Activated CD8-positive, alpha-beta T cell treated with anti-CD3 and anti-CD28 coated beads for 36 hours (primary cell): ENCODE measurements at regions of chr15 and their contacts with region 1.

Region 1: DNA sequence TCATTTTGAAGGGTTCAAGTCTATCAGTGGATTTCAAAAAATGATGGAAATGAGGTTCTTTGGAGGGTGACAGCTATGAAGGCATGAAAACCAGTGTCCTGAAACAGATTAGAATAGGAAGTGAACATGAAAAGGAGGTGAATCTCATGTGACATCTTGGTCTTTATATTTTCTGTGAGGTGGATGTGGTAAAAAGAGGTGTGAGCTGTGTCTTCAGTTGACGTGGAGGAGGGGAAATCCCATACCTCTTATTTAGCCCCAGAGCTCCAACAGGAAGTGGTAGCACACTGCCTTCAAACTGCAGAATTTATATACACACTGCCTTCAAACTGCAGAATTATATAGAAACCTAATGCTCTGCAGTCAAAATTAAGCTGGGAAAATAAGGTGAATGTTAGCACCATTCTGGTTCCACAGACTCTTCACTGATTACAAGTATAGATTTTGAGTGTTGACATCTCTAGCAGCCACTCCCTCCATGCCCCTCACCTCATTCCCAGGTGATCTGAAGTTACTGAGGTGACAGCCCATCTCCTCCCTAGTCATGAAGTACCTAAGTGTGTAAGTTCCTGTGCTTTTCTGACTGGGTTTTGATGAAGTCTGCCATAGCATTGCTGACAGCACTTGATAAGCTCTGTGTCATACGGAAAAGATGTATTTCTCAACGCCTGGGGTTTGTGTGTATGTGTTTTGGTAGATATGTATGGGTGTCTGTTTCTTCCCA is 2.7 kb downstream of the RAB8B start:
- DNase-seq: peak; percentile 78
- ATAC-seq: peak; percentile 49
- H3K4me3 Mint-ChIP-seq: peak overlapping the region; percentile 89
- H3K27ac Mint-ChIP-seq: peak overlapping the region; percentile 93
- H3K4me1 Mint-ChIP-seq: peaks cover 53% of the 10 kb centered on the region
- H3K27me3 Mint-ChIP-seq: no peaks in the 10 kb centered on the region
- CTCF ChIP-seq: no peak

Region 2: GRCh38 chr15:63157118-63157843 is 34.8 kb before region 1 on chr15 and contains the start of gene RPS27L:
- CTCF ChIA-PET with region 1: interaction called, 5 read pairs
- POLR2A ChIA-PET with region 1: interaction called, 20 read pairs
- intact Hi-C with region 1: loop called (anchors 5 kb)
- DNase-seq: peak; percentile 94
- ATAC-seq: peak; percentile 97
- H3K4me3 Mint-ChIP-seq: peak within 1 kb of the TSS; percentile 98
- H3K27ac Mint-ChIP-seq: peak within 1 kb of the TSS; percentile 97
- H3K4me1 Mint-ChIP-seq: peaks cover 17% of the 10 kb centered on the region
- H3K27me3 Mint-ChIP-seq: no peaks in the 10 kb centered on the region
- CTCF ChIP-seq: no peak
- total RNA-seq, gene RPS27L: 150 to 158 TPM

Region 3: DNA sequence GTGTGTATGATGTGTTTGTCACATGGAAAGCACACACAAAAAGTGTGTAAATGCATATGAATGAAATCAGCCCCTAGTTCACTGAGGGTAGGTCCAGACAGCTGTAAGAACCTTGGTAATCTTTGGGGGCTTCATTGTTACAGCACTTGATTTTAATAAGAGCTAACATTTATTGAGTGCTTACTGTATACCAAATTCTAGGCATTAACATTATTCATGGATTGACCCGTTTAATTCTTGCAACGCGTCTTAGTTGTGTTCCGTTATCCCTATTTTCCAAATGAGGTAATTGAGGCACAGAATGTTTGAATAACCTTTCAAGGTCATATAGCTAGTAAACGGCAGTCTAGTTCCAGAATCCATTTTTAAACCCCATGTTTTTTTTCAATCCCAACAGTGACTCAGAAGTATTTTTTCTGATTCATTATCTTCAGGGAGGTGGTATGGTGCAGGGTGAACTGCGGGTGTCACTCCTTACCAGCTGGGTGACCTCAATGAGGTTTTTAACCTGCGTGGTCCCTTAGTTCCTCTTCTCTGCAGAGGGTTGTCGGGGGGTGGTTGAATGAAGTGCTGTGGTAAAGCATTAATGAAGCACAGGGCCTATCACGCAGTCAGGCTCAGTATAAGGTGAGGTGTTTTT is 11.5 kb after region 1 on chr15:
- CTCF ChIA-PET with region 1: interaction called, 15 read pairs
- POLR2A ChIA-PET with region 1: interaction called, 39 read pairs
- intact Hi-C with region 1: no loop called
- DNase-seq: peak; percentile 84
- ATAC-seq: peak; percentile 81
- H3K4me3 Mint-ChIP-seq: peak overlapping the region; percentile 8
- H3K27ac Mint-ChIP-seq: peak overlapping the region; percentile 74
- H3K4me1 Mint-ChIP-seq: peaks cover 90% of the 10 kb centered on the region
- H3K27me3 Mint-ChIP-seq: no peaks in the 10 kb centered on the region
- CTCF ChIP-seq: no peak

Region 4: DNA sequence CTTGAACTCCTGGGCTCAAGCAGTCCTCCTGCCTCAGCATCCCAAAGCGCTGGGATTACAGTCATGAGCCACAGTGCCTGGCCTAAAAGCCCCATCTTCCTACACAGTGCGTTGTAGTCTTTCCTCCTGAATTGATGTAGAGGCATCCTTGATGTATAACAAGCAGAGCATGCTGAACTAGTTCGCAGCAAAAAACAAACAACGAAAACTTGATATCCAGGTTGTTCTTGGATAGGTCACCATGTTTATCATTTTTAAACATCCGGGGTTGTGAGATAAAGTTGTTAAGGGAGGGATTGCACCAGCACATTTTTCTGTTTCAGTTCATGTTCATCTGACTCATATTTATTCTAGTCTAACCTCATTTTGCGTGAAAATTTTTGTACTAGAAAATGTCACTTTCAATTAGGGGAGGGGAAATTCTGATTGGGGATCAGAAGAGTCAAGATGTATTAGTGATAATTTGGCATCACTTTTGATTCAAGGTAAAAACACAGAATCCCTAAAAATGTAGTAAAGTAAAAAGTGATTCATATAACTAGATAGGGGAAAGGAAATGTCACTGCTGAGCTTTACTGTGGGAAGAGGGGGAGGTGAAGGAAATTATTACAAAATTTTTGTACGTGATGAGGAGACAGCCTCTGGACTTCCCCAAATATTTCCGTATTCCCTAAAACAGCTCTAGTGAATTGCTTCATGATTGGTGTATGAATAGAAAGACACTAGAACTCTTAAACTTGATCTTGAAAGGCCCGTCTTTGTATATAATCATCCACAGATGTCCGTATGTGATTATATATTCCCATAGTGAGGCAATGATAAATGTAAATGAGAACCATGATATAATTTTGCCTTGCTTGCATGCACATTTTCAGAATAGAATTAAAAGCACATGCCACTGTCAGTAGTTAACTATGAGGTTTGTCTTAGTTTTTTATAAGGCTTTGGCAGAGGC is 20.3 kb after region 1 on chr15:
- CTCF ChIA-PET with region 1: interaction called, 24 read pairs
- POLR2A ChIA-PET with region 1: interaction called, 27 read pairs
- intact Hi-C with region 1: loop called (anchors 2 kb)
- DNase-seq: no peak
- ATAC-seq: peak; percentile 65
- H3K4me3 Mint-ChIP-seq: peak overlapping the region; percentile 67
- H3K27ac Mint-ChIP-seq: peak overlapping the region; percentile 99
- H3K4me1 Mint-ChIP-seq: peaks cover 86% of the 10 kb centered on the region
- H3K27me3 Mint-ChIP-seq: no peaks in the 10 kb centered on the region
- CTCF ChIP-seq: no peak

Region 5: DNA sequence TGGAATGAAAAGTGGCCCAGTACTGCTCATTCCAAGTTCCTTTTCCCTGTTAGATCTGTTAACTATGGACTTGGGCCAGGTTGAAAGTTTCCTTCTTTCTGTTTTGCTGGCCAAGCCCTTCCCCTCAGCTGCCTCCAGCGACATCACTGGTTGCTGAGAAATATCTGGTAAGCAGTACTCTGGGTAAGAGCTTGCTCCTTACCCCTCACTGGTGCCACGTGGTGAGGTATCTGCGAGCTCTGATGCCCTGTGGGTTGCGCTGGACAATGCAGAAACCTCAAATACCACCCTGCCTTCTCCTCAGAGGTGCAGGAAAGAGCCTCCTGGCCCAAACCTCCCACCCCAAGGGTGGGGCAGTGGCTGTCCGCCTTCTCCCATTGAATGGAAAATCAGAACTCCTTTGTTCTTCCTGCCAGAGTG is 42.4 kb after region 1 on chr15:
- CTCF ChIA-PET with region 1: interaction called, 6 read pairs
- POLR2A ChIA-PET with region 1: interaction called, 20 read pairs
- intact Hi-C with region 1: loop called (anchors 5 kb)
- DNase-seq: no peak
- ATAC-seq: no peak
- H3K4me3 Mint-ChIP-seq: no peak overlapping the region
- H3K27ac Mint-ChIP-seq: peak overlapping the region; percentile 76
- H3K4me1 Mint-ChIP-seq: peaks cover 75% of the 10 kb centered on the region
- H3K27me3 Mint-ChIP-seq: no peaks in the 10 kb centered on the region
- CTCF ChIP-seq: no peak

Region 6: DNA sequence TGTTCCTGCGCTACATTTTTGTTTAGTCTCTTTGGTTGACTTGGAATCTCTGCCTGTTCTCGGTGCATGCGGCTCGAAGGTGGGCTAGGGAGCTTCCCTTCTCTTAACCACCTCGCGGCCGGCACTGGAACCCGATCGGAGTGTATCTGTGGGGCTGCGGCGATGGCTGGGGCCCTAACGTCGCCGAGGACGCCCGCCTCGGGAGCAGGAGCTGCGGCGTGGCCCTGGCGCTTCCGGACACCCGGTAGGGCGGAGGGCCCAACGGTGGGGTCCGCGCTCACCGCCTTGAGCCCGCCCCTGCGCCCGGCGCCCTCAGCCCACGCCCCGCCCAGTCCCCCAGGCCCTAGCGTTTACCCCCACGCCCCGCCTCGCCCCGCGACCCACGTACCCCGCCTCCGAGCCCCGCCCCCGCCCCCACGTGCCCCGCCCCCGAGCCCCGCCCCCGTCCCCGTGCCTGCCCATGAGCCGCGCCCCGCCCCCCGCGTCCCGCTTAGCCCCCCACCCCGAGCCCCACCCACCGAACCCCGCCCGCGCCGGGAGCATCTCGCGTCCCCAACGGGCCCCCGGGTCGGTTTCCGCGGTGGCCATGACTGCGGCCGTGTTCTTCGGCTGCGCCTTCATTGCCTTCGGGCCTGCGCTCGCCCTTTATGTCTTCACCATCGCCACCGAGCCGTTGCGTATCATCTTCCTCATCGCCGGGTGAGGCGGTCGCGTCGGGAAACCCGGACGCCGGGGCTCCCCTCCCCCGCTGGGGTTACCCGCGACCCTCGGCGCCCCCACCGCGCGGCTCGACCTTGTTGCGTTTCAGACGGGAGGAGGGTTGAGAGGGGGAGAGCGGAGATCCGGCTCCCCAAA is 85.2 kb after region 1 on chr15 and contains the start of gene APH1B:
- CTCF ChIA-PET with region 1: interaction called, 3 read pairs
- POLR2A ChIA-PET with region 1: interaction called, 5 read pairs
- intact Hi-C with region 1: loop called (anchors 5 kb)
- DNase-seq: peak; percentile 77
- ATAC-seq: peak; percentile 84
- H3K4me3 Mint-ChIP-seq: peak within 1 kb of the TSS; percentile 81
- H3K27ac Mint-ChIP-seq: peak within 1 kb of the TSS; percentile 91
- H3K4me1 Mint-ChIP-seq: peaks cover 33% of the 10 kb centered on the region
- H3K27me3 Mint-ChIP-seq: no peaks in the 10 kb centered on the region
- CTCF ChIP-seq: no peak
- total RNA-seq, gene APH1B: 7.0 to 9.7 TPM